ENCODE measurements at regions of chr2 and their contacts with region 1.

Region 1: DNA sequence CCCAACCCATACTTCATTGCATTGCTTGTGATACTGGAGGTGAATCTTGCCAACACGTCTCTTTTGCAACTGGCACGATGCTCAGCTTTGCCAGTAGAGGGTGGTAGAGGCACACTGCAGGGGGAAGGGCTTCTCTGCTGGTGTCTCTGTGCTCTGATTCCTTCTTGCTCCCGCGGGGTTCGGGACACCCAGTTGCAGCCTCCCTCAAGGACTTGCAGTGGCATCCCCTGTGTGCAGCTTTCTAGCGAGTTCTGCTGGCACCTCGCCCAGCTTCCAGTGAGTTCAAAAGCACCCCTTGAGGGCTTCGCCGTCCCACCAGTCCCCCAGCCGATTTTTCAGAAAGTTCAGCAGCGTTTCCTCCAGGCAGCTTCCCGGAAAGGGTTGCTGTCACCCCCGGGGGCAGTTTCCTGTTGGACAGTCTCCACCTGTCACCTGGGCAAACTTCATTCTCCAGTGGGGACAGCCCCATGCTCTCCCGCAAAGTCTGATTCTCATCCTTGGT is 35.3 kb upstream of the EN1 start:
- DNase-seq: no peak
- H3K4me3 ChIP-seq: no peak overlapping the region
- H3K27me3 ChIP-seq: no peaks in the 10 kb centered on the region; the same call in 1 of the 2 replicates
- CTCF ChIP-seq: peak; percentile 87

Region 2: GRCh38 chr2:118661179-118661578 is 221.6 kb before region 1 on chr2:
- CTCF ChIA-PET with region 1: no interaction called
- POLR2A ChIA-PET with region 1: no interaction called
- DNase-seq: no peak
- H3K4me3 ChIP-seq: no peak overlapping the region
- H3K27me3 ChIP-seq: no peaks in the 10 kb centered on the region
- CTCF ChIP-seq: no peak

Region 3: GRCh38 chr2:118845522-118846389 is 37.0 kb before region 1 on chr2:
- CTCF ChIA-PET with region 1: interaction called, 10 read pairs
- POLR2A ChIA-PET with region 1: no interaction called
- DNase-seq: no peak
- H3K4me3 ChIP-seq: no peak overlapping the region
- H3K27me3 ChIP-seq: peaks cover 71% of the 10 kb centered on the region
- CTCF ChIP-seq: no peak

Region 4: GRCh38 chr2:118865106-118865505 is 17.7 kb before region 1 on chr2:
- CTCF ChIA-PET with region 1: interaction called, 57 read pairs
- POLR2A ChIA-PET with region 1: no interaction called
- DNase-seq: no peak
- H3K4me3 ChIP-seq: no peak overlapping the region
- H3K27me3 ChIP-seq: peaks cover 19% of the 10 kb centered on the region
- CTCF ChIP-seq: peak; percentile 64

Region 5: DNA sequence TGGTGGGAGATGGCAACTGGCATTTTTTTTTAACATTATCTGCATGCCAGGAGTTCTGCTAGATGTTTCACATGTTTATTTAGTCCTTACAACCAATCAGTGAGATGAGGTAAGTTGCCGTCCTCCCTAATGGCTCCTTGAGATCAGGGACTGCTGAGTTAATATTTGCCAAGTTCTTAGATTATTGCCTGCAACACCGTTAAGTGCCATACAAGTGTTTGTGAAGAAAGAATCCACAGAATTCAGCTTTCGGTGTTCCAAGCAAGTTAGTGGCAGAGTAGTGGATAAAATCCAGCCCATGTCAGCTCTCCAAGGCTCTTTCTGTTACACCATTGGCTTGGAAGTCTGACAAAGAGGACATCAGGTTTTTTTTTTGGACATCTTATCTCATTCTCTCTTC is 179.9 kb after region 1 on chr2:
- CTCF ChIA-PET with region 1: no interaction called
- POLR2A ChIA-PET with region 1: no interaction called
- DNase-seq: no peak
- H3K4me3 ChIP-seq: no peak overlapping the region
- H3K27me3 ChIP-seq: no peaks in the 10 kb centered on the region
- CTCF ChIP-seq: no peak